ENCODE measurements at regions of chr7 and their contacts with region 1.

Region 1: DNA sequence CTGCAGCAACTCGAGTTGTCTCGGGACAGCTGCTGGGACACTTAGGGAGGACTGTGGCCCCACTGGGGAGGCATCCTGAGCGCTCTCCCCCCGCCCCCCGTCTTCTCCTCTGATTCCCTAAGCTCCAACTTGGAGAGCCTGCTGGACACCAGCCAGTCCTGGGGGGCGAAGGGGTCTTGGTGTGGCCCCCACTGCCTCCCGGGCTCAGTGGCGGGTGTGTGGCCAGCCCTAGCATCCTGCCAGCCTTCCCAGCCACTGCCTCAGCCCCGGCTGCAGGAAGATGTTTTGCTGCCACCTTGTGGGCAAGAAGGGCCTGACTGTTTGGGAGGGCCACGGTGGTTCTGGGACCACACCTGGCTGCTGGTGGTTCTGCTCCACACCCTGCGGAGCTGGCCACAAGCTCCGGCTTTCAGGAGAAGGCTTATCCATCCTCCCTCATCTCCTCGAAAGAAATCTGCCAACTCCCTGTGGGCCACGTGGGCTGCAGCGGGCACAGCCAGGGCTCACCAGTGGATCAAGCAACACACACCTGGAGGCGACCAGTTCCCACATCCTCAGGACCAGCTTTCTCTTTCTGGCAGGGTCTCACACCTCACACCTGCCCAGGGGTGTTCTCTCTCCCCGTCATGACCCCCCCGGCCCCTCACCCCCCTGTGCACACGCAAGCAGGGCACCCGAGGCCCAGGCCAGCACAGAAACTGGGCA is 24.8 kb downstream of the AGAP3 start:
- DNase-seq: peak; percentile 83
- H3K4me3 Mint-ChIP-seq: no peak overlapping the region
- H3K27ac Mint-ChIP-seq: no peak overlapping the region
- H3K4me1 Mint-ChIP-seq: no peaks in the 10 kb centered on the region
- H3K27me3 Mint-ChIP-seq: peaks cover 11% of the 10 kb centered on the region

Region 2: DNA sequence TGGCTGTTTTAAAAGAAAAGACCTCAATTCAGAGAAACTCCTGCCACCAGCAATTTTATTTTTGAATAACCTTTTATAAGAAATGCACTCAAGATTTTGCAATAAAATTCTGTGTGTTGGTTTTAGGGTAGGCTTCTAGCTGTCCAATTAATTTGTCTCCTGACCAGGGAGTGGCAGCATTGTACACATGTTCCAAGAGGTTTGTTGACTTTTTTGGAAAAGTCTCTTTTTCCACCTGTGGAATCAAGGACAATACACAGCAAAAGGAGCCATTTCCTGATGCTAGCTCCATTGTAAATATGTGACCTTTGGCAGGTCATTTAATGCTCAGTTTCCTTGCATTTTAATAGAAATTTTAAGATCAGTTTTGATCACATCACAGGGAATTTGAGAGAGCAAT is 372.1 kb before region 1 on chr7:
- CTCF ChIA-PET with region 1: no interaction called
- intact Hi-C with region 1: no loop called
- DNase-seq: no peak
- H3K4me3 Mint-ChIP-seq: peak overlapping the region; percentile 88
- H3K27ac Mint-ChIP-seq: peak overlapping the region; percentile 95
- H3K4me1 Mint-ChIP-seq: peaks cover 72% of the 10 kb centered on the region
- H3K27me3 Mint-ChIP-seq: no peaks in the 10 kb centered on the region

Region 3: DNA sequence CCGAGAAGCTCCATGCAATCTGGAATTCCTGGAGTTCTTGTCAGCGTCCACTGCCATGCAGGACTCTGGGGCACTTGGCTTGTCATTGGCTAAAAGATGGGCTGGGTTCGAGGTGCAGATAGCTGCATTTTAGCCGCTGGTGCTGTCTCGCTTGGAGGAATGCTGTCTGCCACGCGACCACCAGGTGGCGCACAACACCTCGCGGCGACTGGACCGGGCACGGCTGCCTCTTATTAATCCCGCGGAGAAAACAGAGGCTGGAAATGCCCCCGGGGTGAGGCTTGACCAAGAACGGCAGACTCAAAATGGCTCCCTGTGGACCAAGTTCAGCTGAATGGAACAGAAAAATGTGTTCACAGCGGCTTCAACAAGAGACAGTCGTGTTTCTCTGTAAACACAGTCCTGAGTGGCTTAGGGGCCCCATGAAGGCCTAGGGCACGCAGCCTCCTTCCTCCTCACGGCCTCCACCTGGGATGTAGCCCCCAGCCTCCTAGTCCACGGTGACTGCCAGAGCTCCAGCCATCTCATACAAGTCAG is 212.6 kb before region 1 on chr7:
- CTCF ChIA-PET with region 1: no interaction called
- intact Hi-C with region 1: loop called (anchors 1 kb)
- DNase-seq: peak; percentile 86
- H3K4me3 Mint-ChIP-seq: no peak overlapping the region
- H3K27ac Mint-ChIP-seq: no peak overlapping the region
- H3K4me1 Mint-ChIP-seq: peaks cover 2% of the 10 kb centered on the region
- H3K27me3 Mint-ChIP-seq: peaks cover 20% of the 10 kb centered on the region

Region 4: GRCh38 chr7:150988230-150989226 is 122.6 kb before region 1 on chr7:
- CTCF ChIA-PET with region 1: no interaction called
- intact Hi-C with region 1: loop called (anchors 5 kb)
- DNase-seq: peak; percentile 77
- H3K4me3 Mint-ChIP-seq: no peak overlapping the region
- H3K27ac Mint-ChIP-seq: no peak overlapping the region
- H3K4me1 Mint-ChIP-seq: peaks cover 25% of the 10 kb centered on the region
- H3K27me3 Mint-ChIP-seq: no peaks in the 10 kb centered on the region

Region 5: DNA sequence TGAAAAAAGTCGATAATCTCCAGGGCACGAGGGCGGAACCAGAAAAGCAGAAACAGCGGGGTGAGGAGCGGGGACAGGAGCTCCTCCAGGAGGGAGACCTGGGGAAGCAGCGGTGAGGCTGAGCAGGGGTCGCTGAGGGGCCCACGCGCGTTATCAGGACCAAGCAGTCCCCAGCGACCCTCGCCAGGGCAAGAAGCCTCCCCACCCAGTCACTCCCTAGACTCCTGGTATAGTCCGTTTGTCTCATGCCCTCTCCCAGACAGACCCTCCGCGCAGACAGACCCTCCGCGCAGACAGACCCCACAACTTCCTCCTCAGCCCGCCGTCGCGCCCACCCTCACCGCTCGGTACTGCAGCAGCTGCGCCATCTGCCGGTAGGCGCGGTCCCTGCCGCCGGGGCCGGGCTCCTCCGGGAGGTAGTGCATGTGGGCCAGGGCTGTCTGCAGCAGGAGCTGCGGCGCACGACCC is 93.1 kb before region 1 on chr7:
- CTCF ChIA-PET with region 1: interaction called, 12 read pairs
- intact Hi-C with region 1: no loop called
- DNase-seq: peak; percentile 82
- H3K4me3 Mint-ChIP-seq: peak overlapping the region; percentile 72
- H3K27ac Mint-ChIP-seq: no peak overlapping the region
- H3K4me1 Mint-ChIP-seq: peaks cover 50% of the 10 kb centered on the region
- H3K27me3 Mint-ChIP-seq: peaks cover 7% of the 10 kb centered on the region

Region 6: GRCh38 chr7:151057989-151058780 is 52.9 kb before region 1 on chr7:
- CTCF ChIA-PET with region 1: interaction called, 7 read pairs
- intact Hi-C with region 1: loop called (anchors 1 kb)
- DNase-seq: peak; percentile 98
- H3K4me3 Mint-ChIP-seq: peak overlapping the region; percentile 85
- H3K27ac Mint-ChIP-seq: peak overlapping the region; percentile 89
- H3K4me1 Mint-ChIP-seq: peaks cover 35% of the 10 kb centered on the region
- H3K27me3 Mint-ChIP-seq: no peaks in the 10 kb centered on the region

Region 7: DNA sequence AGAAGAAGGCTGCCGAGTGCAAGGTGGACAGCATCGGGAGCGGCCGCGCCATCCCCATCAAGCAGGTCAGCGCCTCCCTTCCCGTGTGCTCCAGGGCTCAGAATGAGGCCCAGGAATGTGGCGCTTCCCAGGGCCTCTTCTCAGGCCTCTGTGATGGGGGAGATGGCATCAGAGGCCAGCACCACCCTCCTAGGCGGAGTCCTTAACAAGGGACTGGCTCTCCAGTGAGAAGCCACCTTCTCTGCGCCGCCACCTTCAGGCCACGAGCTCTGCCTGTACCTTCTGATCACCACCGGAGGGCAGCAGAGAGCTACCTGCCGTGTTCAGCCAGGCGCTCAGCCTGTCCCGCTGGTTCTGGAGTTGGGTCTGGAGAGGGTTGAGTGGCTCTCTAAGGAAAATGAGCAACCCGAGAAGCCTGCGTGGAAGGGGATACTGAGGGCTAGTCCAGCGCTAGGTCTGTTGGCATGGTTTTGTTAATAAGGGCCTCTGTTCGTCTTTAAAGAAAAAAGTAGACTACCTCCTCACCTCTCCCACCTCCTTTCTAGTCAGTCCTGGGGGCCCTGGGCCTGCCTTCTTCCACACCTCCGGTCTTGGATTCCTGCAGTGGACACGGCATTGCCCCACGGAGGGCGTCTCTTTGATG is 12.8 kb after region 1 on chr7:
- CTCF ChIA-PET with region 1: interaction called, 10 read pairs
- intact Hi-C with region 1: no loop called
- DNase-seq: peak; percentile 89
- H3K4me3 Mint-ChIP-seq: no peak overlapping the region
- H3K27ac Mint-ChIP-seq: no peak overlapping the region
- H3K4me1 Mint-ChIP-seq: peaks cover 4% of the 10 kb centered on the region
- H3K27me3 Mint-ChIP-seq: no peaks in the 10 kb centered on the region

Measured in activated naive CD4-positive, alpha-beta T cell treated with anti-CD3 and anti-CD28 coated beads for 36 hours (primary cell).